ENCODE measurements at regions of chr15 and their contacts with region 1.

Region 1: GRCh38 chr15:34109797-34110663 is 8.1 kb downstream of the PGBD4 start:
- DNase-seq: no peak
- H3K4me3 ChIP-seq: no peak overlapping the region
- H3K27me3 ChIP-seq: no peaks in the 10 kb centered on the region; the same call in 1 of the 2 replicates
- CTCF ChIP-seq: peak; percentile 76

Region 2: GRCh38 chr15:34122771-34123183 is 12.7 kb after region 1 on chr15:
- CTCF ChIA-PET with region 1: interaction called, 22 read pairs
- POLR2A ChIA-PET with region 1: no interaction called
- DNase-seq: peak; percentile 95
- H3K4me3 ChIP-seq: no peak overlapping the region
- H3K27me3 ChIP-seq: no peaks in the 10 kb centered on the region
- CTCF ChIP-seq: no peak

Region 3: GRCh38 chr15:34215789-34216188 is 105.8 kb after region 1 on chr15:
- CTCF ChIA-PET with region 1: interaction called, 124 read pairs
- POLR2A ChIA-PET with region 1: interaction called, 10 read pairs
- DNase-seq: no peak
- H3K4me3 ChIP-seq: no peak overlapping the region
- H3K27me3 ChIP-seq: no peaks in the 10 kb centered on the region
- CTCF ChIP-seq: no peak

Region 4: GRCh38 chr15:34367101-34368081 is 257.4 kb after region 1 on chr15 and contains the start of gene LPCAT4:
- CTCF ChIA-PET with region 1: interaction called, 34 read pairs
- POLR2A ChIA-PET with region 1: no interaction called
- DNase-seq: peak; percentile 26
- H3K4me3 ChIP-seq: peak within 1 kb of the TSS; percentile 91
- H3K27me3 ChIP-seq: no peaks in the 10 kb centered on the region
- CTCF ChIP-seq: peak; percentile 96
- polyA plus RNA-seq, gene LPCAT4: 29.5 and 45.3 TPM in 2 replicates

Measured in BJ (cell line).